Right cardiac atrium (tissue), 5 donors: ENCODE measurements at regions of chr1 and their contacts with region 1.

Region 1: DNA sequence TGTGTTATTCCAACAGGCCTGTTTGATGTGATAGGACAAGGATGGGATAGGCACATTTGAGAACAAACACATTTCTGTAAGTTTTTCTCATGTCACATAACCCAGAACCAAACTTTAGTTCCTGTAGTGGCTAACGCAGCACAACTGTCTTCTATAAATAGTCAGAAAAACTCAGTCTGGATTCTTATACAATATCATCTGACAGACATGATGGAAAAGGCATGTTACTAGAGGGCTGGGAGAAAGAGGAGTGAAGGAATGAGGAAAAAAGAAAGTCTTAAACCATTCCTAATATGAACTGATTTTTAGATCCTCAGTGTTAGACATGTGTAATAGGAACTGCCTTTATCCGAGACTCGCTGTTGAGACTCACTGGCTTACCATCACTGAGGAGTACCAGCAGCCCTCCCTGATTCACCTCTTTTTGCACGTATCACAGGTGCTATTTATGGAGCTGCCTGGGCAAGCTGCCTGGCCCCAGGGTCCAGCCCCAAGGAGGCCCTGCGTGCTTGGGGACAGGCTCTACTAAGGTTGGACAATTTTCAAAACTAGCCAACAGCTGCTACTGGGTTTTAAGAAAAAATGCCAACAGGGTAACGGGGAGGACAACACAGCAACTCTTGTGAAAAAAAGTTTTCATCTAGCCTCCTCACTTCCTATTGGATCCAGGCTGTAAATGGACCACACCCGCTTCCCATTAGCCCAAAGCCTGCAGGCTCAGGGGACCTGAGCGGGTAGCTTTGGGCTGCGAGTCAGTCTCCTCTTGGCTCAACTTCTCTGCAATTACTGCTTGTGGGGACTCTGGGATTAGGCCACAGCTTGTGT is 30.7 kb upstream of the SERBP1 start:
- DNase-seq: peak; percentile 44 to 78 (median 77)
- ATAC-seq: peak; percentile 83 to 92
- H3K4me3 ChIP-seq: no peak overlapping the region
- H3K27ac ChIP-seq: peak overlapping the region; percentile 56
- H3K4me1 ChIP-seq: peaks cover 3% of the 10 kb centered on the region
- H3K27me3 ChIP-seq: no peaks in the 10 kb centered on the region

Region 2: GRCh38 chr1:67390041-67390887 is 70.6 kb before region 1 on chr1:
- intact Hi-C with region 1: loop called in 1 of 4 experiments (anchors 10 kb)
- DNase-seq: no peak
- ATAC-seq: no peak
- H3K4me3 ChIP-seq: no peak overlapping the region
- H3K27ac ChIP-seq: no peak overlapping the region
- H3K4me1 ChIP-seq: peaks cover 6% of the 10 kb centered on the region
- H3K27me3 ChIP-seq: no peaks in the 10 kb centered on the region

Region 3: DNA sequence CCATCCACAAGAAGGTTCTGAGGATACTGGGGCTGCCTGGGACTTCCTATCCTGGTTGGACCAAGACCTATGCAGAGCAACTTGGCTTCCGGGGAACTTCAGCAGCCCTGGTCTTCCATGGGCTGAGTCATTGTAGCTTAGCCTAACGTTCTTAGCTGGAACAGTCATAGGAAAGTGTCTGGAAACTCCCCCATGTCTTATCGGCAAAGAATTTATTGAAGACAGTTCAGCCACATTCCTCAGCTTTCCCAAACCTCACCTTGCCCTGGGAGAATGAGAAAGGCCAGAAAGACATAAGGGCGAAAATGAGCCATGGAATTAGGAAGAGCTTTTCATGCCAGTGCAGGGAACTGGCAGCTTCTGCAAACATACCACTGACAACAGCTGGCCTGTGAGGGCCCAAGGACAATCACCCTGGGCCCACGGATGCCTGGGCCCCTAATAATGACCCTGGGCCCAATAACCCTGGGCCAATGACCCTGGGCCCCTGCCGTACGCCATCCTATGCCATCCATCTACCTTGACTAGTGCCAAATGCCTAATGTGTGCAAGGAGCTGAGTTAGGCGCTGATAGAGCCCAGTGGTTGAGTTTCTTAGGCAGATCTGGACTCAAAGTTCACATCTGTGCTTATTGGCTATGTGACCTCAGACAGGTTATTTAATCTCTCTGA is 109.7 kb after region 1 on chr1:
- intact Hi-C with region 1: no loop called
- DNase-seq: no peak
- ATAC-seq: peak; percentile 13 to 76
- H3K4me3 ChIP-seq: no peak overlapping the region
- H3K27ac ChIP-seq: no peak overlapping the region
- H3K4me1 ChIP-seq: peaks cover 6% of the 10 kb centered on the region
- H3K27me3 ChIP-seq: no peaks in the 10 kb centered on the region

Region 4: GRCh38 chr1:67780637-67781036 is 319.7 kb after region 1 on chr1:
- intact Hi-C with region 1: no loop called
- DNase-seq: no peak
- ATAC-seq: peak; percentile 46 to 79
- H3K4me3 ChIP-seq: no peak overlapping the region
- H3K27ac ChIP-seq: no peak overlapping the region
- H3K4me1 ChIP-seq: peaks cover 6% of the 10 kb centered on the region
- H3K27me3 ChIP-seq: no peaks in the 10 kb centered on the region